Cardiac septum (tissue), 1 donor: ENCODE measurements at regions of chr1 and their contacts with region 1.

Region 1: DNA sequence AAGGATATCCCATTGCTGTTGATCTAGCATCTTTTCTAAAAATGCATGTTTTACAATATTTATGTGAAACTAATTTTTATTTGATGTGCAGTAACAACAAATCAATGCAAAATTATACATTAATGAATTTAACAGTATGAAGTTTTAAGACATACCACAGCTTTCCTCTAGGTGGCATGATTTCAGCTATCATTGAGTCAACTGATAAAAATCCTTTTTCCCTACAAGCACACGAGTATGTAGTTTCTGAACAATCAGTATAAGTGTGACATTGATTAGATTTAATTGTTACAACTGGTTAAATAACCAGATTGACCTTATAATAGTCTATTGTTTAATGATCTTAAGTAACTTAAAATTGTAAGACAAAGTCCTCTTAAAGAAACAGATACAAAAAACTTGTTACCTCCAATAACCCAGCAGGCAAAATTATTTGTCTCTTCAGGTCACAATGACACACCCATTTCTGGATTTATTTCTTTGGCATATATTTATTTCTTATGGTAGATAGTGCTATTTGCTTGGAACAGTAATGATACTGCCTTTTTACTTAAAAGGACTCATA is 5.8 kb upstream of the TGFB2 start:
- DNase-seq: no peak

Region 2: DNA sequence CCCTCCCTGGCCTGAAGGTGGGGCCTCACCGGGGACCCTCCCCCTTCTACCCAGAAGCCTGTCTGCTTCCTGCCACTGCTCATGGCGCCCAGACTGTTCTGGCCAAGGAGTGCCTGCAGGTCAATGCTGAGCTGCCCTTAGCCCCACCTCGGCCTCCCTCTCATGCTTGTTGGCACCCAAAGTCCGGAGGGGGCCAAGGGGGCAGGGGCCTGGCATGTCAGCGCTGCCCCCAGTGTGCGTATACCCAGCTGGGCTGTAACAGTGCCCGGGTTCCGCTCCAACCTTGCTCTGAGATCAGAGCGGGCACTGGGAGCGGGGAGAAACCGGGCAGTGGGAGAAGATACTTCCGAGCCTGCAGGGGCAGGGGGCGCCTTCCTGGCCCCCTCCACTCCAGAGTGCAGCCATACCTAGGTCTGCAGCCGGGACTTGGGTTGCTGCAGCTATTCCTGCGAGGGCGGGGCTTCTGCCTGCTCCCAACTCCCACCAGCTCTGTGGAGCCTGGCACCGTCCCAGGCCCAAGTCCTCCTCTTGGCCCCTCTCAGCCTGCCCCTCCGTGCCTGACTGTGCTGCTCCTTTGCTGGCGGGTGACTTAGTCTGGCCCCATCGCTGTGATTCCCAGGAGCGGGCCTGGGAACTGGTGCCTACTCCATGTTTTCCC is 15.7 kb before region 1 on chr1:
- intact Hi-C with region 1: no loop called
- DNase-seq: no peak

Region 3: DNA sequence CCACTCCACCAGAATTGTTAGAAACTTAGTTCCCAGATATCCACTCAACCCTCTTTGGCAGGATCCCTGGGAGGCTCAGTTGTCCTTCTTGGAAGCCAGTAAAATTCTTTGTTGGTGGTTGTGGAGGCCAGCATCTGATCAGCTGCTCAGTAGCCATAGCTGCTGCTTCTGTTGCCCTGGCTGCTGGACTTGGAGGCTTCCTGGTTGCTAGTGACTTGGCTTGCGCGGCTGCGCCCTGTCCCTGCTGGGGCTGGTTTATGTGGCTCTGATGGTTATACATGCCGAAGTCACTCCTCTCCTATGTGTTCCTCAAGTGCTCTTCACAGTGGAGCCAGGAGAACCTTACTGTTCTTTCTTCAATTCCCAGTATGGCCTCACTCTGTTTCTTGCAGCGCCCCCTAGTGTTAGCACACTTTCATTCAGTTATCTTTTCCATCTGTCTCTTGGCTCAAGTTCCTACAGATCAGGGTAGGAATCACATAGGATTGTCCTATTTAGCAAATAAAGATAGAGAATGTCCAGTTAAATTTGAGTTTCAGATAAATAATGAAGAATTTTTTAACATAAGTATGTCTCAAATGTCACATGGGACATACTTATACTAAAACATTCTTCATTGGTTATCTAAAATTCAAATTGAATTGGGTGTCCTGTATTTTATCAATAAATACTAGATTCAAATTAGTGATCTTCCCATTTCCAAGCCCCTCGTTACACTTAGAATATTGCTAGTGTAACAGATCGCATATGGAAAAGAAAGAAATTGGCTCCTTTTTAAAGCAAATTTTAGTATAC is 182.2 kb after region 1 on chr1:
- intact Hi-C with region 1: loop called (anchors 2 kb)
- DNase-seq: no peak

Region 4: GRCh38 chr1:219066631-219067349 is 727.4 kb after region 1 on chr1:
- intact Hi-C with region 1: loop called (anchors 5 kb)
- DNase-seq: no peak